ENCODE measurements at regions of chr13 and their contacts with region 1.

Region 1: GRCh38 chr13:97432917-97433726 is 847 bp upstream of the RAP2A start:
- DNase-seq: peak; percentile 98
- ATAC-seq: peak; percentile 80
- H3K4me3 ChIP-seq: peak overlapping the region; percentile 76 to 80
- H3K27ac ChIP-seq: peak overlapping the region; percentile 92
- H3K4me1 ChIP-seq: peaks cover 7 to 23% of the 10 kb centered on the region in 2 experiments
- H3K27me3 ChIP-seq: no peaks in the 10 kb centered on the region
- CTCF ChIP-seq: no peak
- POLR2A ChIP-seq: no peak
- RAD21 ChIP-seq: no peak

Region 2: DNA sequence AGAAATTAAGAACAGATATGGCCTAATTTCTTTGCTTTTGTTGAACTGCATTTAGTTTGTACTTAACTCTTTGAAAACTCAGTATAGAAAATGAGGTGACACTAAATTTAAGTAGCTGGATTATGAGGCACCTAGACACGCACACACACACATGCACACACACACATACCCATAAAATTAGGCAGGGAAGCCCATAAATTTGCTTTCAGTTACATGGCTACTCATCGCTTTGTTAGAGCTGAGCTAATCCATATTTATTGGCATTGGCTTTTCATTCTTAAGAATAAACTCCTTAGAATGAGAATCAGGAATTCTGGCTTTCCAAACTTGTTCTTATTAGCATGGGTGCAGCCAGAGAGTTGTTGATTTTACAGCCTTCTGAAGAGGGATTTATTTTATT is 272.7 kb before region 1 on chr13:
- CTCF ChIA-PET with region 1: no interaction called
- POLR2A ChIA-PET with region 1: no interaction called
- RAD21 ChIA-PET with region 1: no interaction called
- intact Hi-C with region 1: no loop called
- DNase-seq: no peak
- ATAC-seq: no peak
- H3K4me3 ChIP-seq: no peak overlapping the region
- H3K27ac ChIP-seq: no peak overlapping the region
- H3K4me1 ChIP-seq: no peaks in the 10 kb centered on the region
- H3K27me3 ChIP-seq: no peaks in the 10 kb centered on the region
- CTCF ChIP-seq: no peak
- POLR2A ChIP-seq: no peak
- RAD21 ChIP-seq: no peak

Region 3: GRCh38 chr13:97567510-97568243 is 134.6 kb after region 1 on chr13:
- CTCF ChIA-PET with region 1: no interaction called
- POLR2A ChIA-PET with region 1: no interaction called
- RAD21 ChIA-PET with region 1: no interaction called
- intact Hi-C with region 1: loop called (anchors 1 kb)
- DNase-seq: peak; percentile 40
- ATAC-seq: peak; percentile 90
- H3K4me3 ChIP-seq: peak overlapping the region in 1 of 2 experiments; percentile 38; a peak in 2 of 4 replicates
- H3K27ac ChIP-seq: 0 out of 2 replicates have a peak overlapping the region, but pooled peaks have one; percentile 29
- H3K4me1 ChIP-seq: peaks cover 16 to 22% of the 10 kb centered on the region in 2 experiments
- H3K27me3 ChIP-seq: no peaks in the 10 kb centered on the region
- CTCF ChIP-seq: no peak
- POLR2A ChIP-seq: no peak
- RAD21 ChIP-seq: no peak

Region 4: GRCh38 chr13:97975848-97976609 is 542.9 kb after region 1 on chr13:
- CTCF ChIA-PET with region 1: no interaction called
- POLR2A ChIA-PET with region 1: no interaction called
- RAD21 ChIA-PET with region 1: no interaction called
- intact Hi-C with region 1: loop called (anchors 10 kb)
- DNase-seq: peak; percentile 42
- ATAC-seq: peak; percentile 92
- H3K4me3 ChIP-seq: peak overlapping the region; percentile 67 to 78
- H3K27ac ChIP-seq: peak overlapping the region; percentile 90
- H3K4me1 ChIP-seq: peaks cover 12 to 30% of the 10 kb centered on the region in 2 experiments
- H3K27me3 ChIP-seq: no peaks in the 10 kb centered on the region
- CTCF ChIP-seq: no peak
- POLR2A ChIP-seq: no peak
- RAD21 ChIP-seq: no peak

Region 5: DNA sequence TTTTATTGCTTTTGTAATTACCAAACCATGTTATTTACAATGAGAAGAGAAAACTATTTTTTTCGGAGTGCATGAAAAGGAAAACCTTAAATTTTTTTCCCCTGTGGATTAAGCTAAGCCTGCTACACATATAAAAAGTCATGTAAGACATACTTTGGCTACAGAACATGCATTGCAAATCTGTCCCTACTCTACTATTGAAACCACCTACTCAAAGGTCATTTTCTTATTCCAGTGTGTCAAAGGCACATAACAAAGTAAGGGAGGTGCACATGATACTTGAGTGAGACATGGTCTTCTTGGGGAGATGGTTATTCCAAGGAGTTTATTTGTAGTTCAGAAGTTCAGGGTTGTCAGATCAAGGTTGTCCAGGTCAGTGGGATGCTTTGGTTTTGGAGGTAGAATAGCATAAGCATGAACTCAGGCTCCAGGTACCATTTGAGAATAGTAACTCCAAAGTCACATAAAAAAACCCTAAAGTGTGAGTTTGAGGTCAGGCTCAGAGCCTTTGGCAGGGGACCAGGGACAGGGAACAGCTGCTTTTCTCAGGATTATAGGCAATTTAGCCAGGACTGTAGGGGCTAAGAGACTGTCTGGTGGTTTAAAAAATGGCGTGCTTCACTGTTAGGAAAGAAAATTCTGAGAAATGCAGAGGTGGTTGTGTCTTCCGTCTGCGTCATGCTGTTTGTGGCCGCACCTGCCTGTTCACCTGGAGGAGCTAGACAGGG is 725.2 kb after region 1 on chr13:
- CTCF ChIA-PET with region 1: no interaction called
- POLR2A ChIA-PET with region 1: no interaction called
- RAD21 ChIA-PET with region 1: no interaction called
- intact Hi-C with region 1: no loop called
- DNase-seq: no peak
- ATAC-seq: no peak
- H3K4me3 ChIP-seq: no peak overlapping the region
- H3K27ac ChIP-seq: no peak overlapping the region
- H3K4me1 ChIP-seq: peaks cover 4 to 5% of the 10 kb centered on the region in 2 experiments; a peak in 3 of 4 replicates
- H3K27me3 ChIP-seq: no peaks in the 10 kb centered on the region
- CTCF ChIP-seq: no peak
- POLR2A ChIP-seq: no peak
- RAD21 ChIP-seq: no peak

Measured in HCT116 (cell line).